ENCODE measurements at regions of chr3 and their contacts with region 1.

Region 1: GRCh38 chr3:24494618-24495325 is at the start of gene THRB:
- DNase-seq: peak; percentile 89
- ATAC-seq: peak; percentile 71
- total RNA-seq, gene THRB: 25.9 TPM

Region 2: DNA sequence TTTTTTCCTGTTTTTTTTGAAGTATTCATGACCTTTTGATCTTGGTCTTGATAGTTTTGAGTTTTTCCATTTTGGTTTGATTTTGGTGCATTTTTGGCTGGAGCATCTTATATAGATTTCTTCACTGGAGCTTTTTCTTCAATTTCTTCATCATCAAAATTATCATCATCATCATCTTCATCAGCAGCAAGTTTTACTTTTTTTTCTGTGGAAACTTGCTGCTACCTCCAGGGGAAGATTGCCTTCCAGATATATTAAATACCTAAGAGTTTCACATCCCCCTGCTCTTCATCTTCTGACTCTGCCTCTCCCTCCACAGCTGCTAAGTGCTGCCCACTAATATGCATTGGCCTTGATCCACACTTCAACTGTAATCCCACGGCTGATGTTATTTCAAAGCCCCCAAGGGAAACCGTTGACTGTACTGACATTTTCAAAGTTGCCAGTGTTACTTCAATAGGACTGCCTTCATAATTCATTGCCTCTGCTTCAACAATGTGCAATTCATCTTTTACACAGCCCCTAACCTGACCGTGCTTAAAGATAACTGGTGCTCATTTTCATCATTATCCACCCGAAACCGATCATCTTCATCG is 398.0 kb before region 1 on chr3:
- intact Hi-C with region 1: no loop called
- DNase-seq: no peak
- ATAC-seq: peak; percentile 23

Region 3: GRCh38 chr3:24185738-24186384 is 308.9 kb before region 1 on chr3:
- intact Hi-C with region 1: loop called (anchors 5 kb)
- DNase-seq: no peak
- ATAC-seq: peak; percentile 39

Region 4: DNA sequence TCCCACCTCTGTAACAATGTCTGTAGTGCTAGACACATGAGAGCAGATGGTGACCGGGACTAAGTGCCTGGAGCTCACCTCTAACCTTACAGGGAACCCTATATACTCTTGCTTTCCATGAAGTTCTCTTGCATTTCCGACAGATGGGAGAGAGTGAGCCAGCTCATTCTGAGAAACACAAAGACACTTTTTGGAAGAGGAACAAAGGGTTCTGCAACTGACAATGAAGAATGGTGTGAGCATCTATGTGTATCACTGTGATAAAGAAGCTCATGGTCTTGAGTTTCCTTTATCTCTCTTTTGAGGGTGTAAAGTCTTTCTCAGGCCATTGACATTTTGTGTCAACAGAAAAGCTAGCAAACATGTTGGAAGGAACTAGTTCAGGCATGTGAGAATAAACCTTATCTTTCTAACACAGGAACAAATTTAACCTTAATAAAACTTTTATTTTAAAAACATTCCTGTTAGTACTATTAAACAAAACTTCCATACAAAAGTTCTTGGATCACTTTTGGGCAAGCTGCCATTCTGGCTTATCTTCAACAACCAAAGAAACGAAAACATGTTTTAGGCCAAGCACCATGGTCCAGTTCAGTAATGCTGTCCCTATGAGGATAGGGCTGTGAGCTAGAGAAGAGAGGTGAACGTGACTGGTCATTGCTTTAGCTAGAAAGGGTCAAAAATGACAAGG is 142.8 kb before region 1 on chr3:
- intact Hi-C with region 1: loop called (anchors 5 kb)
- DNase-seq: peak; percentile 22
- ATAC-seq: peak; percentile 98

Region 5: DNA sequence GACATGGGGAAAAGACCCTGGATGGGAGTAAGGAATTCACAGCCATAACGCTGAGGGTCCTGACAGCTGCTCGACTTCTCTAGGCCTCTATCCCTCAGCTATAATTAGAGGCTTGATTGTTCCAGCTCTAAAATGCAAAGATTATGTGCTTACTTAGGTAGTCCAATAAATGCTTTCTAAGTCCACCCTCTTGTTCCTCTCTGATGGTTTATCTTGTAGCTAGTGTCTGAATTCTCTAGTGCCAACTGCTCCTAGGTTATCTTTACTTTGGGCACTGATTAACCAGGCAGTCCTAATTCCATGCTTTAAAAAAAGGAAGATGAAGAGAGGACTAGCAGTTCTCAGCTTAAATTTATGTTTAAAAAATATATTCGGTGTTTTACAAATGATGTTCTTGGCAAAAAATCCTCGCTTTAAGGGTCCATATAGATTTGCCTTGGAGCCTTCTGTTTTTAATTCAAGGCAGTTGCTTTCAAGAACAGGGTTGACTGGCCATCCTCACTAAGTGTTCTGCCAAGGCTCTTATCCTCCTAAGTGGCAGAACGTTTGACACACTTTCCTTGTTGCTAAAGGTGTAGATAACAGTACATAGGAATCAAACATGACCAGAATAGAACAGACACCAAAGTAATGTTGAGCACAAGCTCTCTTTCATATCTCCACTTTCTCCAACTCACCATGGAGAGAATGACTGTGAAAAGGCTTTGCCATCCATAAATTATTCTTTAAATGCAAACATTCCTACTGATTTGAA is 60.8 kb before region 1 on chr3:
- intact Hi-C with region 1: loop called (anchors 5 kb)
- DNase-seq: no peak
- ATAC-seq: peak; percentile 90

Region 6: DNA sequence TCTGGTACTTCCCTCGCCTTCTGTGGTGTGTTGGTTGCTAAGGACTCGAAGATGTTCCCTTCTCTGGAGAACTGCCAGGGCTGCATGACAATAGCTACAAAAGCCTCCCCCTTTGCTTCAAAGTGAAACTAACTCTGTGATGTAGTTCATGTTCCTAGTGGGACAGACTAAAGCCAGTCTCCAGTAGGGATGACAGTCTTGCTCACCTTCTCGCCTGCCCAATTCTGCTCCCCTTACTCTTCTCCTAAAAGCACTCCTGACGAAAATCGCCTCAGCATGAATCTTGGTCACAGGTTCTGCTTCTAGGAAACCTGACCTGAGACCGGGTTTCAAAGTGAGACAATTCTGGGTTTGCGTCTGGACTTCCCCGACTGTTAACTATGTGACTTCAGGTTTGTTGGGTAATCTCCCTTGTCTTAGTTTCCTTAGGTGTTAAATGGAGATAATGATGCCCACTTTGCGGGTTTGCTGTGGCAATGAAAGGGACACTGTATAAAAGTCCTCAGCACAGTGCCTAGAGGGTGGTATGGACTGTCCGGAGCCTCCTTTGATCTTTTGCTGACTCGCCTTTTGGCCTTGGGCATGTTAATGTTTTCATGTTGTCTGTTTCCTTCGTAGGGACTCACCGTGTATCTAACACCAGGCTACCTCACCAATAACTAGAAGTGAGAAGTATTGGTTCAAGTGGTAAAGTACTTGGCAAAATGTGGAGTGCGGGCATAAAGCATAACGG is 24.8 kb after region 1 on chr3:
- intact Hi-C with region 1: no loop called
- DNase-seq: peak; percentile 50
- ATAC-seq: no peak

Region 7: DNA sequence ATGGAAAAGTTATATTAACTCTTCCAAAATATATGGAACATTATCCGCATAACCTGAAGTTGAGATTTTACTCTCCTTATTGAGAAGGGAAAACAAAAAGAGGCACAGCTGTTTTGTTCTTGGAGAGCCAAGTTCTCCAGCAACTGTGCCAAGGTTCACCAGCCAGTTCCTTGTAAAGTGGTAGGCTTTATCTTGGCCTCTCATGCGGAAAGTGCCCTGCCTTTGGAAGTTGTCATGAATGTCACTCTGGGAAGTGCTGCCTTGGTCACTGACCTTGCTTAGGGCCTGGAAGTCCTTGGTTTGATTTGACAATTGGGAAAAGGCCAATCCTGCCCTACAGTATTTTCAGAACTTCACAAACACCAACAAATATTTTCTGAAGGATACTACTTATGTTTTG is 44.1 kb after region 1 on chr3:
- intact Hi-C with region 1: loop called (anchors 2 kb)
- DNase-seq: no peak
- ATAC-seq: peak; percentile 97

Region 8: DNA sequence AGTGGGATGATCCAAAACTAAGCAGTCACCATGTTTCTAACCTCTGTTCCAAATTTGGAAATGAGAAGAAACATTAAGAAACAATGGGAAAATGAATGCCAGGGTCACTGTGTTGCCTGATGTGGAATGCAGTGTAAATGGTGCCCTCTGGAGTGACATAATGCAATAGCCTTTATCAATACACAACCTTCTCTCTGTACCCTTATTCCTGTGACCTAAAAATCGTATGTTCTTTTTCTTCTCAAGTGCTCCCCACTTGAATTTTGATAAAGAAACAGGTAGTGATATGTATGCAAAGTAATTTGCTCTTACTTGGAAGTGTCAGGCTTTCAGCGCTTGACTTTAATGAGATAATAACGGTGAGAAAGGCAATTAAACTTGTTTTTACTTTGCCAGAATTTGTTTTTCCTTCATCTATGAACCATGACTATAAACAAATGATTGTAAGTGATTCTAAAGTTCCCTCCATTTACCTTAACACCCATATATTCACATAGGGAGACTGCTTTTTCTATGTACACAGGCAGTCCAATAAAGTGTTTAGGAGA is 145.6 kb after region 1 on chr3:
- intact Hi-C with region 1: loop called (anchors 5 kb)
- DNase-seq: no peak
- ATAC-seq: no peak